ENCODE measurements at regions of chr3 and their contacts with region 1.

Region 1: GRCh38 chr3:84974347-84974746 is 15.6 kb downstream of the CADM2 start:
- DNase-seq: peak; percentile 15
- ATAC-seq: peak; percentile 50; the same call in 1 of the 3 replicates
- H3K4me3 ChIP-seq: no peak overlapping the region
- H3K27ac ChIP-seq: no peak overlapping the region
- H3K4me1 ChIP-seq: no peaks in the 10 kb centered on the region
- H3K27me3 ChIP-seq: no peaks in the 10 kb centered on the region; a peak in 1 of 5 replicates
- CTCF ChIP-seq: peak; percentile 39
- EP300 ChIP-seq: no peak
- POLR2A ChIP-seq: no peak
- RAD21 ChIP-seq: no peak

Region 2: GRCh38 chr3:85090495-85090894 is 116.1 kb after region 1 on chr3:
- CTCF ChIA-PET with region 1: no interaction called
- POLR2A ChIA-PET with region 1: no interaction called
- in situ Hi-C with region 1: no loop called
- intact Hi-C with region 1: loop called (anchors 1 kb)
- DNase-seq: peak; percentile 4
- ATAC-seq: peak; percentile 99
- H3K4me3 ChIP-seq: no peak overlapping the region
- H3K27ac ChIP-seq: no peak overlapping the region
- H3K4me1 ChIP-seq: no peaks in the 10 kb centered on the region
- H3K27me3 ChIP-seq: no peaks in the 10 kb centered on the region
- CTCF ChIP-seq: peak; percentile 55
- EP300 ChIP-seq: no peak
- POLR2A ChIP-seq: no peak
- RAD21 ChIP-seq: no peak

Measured in HepG2 (cell line).